ENCODE measurements at regions of chr6 and their contacts with region 1.

Region 1: DNA sequence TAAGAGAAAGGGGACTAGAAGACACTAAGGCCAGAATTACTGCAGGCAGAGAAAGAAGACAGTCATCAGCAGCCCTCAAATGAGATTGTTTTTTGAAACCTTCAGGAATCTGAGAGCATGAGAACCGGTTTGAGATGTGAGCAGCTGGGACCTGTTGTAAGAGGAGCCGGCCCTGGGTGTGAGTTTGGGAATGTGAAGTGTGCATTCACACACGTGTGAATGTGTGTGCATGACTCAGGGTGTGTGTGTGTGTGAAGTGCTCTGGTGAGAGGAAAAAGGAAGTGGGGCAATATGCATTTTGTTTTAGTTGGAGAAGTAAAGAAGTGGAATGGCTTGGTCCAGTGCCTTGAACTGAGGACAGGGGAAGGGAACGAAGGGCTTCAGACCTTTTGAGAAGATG is 4.3 kb downstream of the SCUBE3 start:
- DNase-seq: no peak
- H3K4me3 ChIP-seq: no peak overlapping the region
- H3K4me3 Mint-ChIP-seq: no peak overlapping the region
- H3K27ac Mint-ChIP-seq: peak overlapping the region; percentile 1
- H3K4me1 ChIP-seq: peaks cover 11% of the 10 kb centered on the region
- H3K4me1 Mint-ChIP-seq: peaks cover 28% of the 10 kb centered on the region
- H3K27me3 ChIP-seq: no peaks in the 10 kb centered on the region
- H3K27me3 Mint-ChIP-seq: no peaks in the 10 kb centered on the region
- CTCF ChIP-seq: no peak

Region 2: DNA sequence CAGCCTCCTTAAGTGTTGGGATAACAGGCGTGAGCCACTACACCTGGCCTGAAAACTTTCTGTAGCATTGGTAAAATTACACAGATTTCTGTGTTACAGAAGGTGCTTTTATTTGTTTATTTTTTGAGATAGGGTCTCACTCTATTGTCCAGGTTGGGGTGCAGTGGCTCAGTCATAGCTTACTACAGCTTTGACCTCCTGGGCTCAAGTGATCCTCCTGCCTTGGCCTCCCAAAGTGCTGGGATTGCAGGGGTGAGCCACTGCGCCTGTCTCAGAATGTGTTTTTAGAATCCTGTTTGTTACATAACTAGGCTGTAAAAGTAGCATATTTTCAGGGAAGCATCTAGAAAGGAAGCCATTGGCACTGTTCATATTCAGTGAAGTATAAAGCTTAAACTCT is 443.1 kb before region 1 on chr6:
- CTCF ChIA-PET with region 1: no interaction called
- POLR2A ChIA-PET with region 1: no interaction called
- intact Hi-C with region 1: loop called (anchors 5 kb)
- DNase-seq: no peak
- H3K4me3 ChIP-seq: no peak overlapping the region
- H3K4me3 Mint-ChIP-seq: no peak overlapping the region
- H3K27ac Mint-ChIP-seq: no peak overlapping the region
- H3K4me1 ChIP-seq: no peaks in the 10 kb centered on the region
- H3K4me1 Mint-ChIP-seq: no peaks in the 10 kb centered on the region
- H3K27me3 ChIP-seq: no peaks in the 10 kb centered on the region
- H3K27me3 Mint-ChIP-seq: no peaks in the 10 kb centered on the region
- CTCF ChIP-seq: no peak

Measured in Caco-2 (cell line).